H1 (cell line): ENCODE measurements at regions of chr16 and their contacts with region 1.

Region 1: DNA sequence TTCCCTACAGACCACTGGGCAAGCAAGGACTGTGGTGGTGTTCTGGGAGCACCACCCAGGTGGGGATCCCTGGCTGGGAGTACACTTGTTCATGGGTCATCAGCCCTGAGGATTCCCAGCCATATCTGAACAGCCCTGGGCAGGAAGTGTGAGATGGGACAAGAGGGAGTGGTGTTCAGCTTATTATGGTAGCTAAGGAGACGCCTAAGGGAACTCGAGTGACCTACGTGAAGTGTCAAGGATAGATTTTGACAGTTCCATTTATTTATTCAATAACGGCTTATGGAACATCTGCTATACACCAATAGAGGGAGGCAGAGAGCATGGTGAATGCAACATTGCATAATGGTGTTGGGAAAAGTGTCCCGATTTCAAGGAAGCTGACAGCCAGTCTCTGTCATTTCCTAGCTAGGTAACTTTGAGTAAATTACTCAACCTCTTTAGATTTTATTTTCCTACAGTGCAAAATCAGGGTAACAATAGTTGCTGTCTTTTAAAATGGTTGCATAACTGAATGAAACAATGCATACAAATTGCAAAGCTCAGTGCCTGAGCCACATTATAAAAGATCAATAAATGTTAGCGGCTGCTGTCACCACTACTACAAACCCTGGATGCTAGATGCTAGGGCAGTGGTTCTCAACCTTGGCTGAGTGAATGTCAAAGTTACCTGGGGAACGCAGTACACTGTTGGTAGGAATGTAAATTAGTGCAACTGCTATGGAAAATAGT is 534.1 kb downstream of the GRIN2A start:
- DNase-seq: peak in 1 of 2 experiments; percentile 50
- H3K4me3 ChIP-seq: no peak overlapping the region
- H3K27ac ChIP-seq: no peak overlapping the region
- H3K4me1 ChIP-seq: no peaks in the 10 kb centered on the region
- H3K27me3 ChIP-seq: no peaks in the 10 kb centered on the region
- CTCF ChIP-seq: peak in 2 of 3 experiments; percentile 64 to 80; a peak in 3 of 4 replicates
- EP300 ChIP-seq: no peak
- POLR2A ChIP-seq: no peak
- RAD21 ChIP-seq: peak; percentile 74 to 81

Region 2: GRCh38 chr16:9556949-9557665 is 91.0 kb before region 1 on chr16:
- CTCF ChIA-PET with region 1: no interaction called
- POLR2A ChIA-PET with region 1: no interaction called
- DNase-seq: no peak
- H3K4me3 ChIP-seq: no peak overlapping the region
- H3K27ac ChIP-seq: no peak overlapping the region
- H3K4me1 ChIP-seq: no peaks in the 10 kb centered on the region
- H3K27me3 ChIP-seq: no peaks in the 10 kb centered on the region
- CTCF ChIP-seq: no peak
- EP300 ChIP-seq: no peak
- POLR2A ChIP-seq: peak in 1 of 2 experiments; percentile 74; a peak in 1 of 3 replicates
- RAD21 ChIP-seq: no peak

Region 3: DNA sequence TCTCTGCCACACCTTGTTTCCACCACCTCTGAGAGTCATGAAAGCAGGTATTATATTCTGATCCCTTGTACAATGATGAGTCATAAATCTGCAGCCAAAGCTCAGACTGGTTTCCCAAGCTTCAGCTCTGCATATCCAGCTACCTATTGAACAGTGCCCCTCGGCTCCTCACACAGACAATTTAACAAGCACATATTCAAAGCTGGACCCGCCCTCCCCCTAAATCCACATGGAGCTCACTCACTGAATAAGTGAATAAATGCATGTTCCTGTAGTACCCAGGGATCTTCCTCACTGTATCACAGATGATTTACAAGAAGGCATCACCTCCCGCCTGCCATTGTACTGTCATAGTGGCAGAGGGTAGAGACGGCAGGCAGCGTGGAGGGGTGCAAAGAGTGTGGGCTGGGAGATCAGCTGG is 17.7 kb after region 1 on chr16:
- CTCF ChIA-PET with region 1: interaction called, 15 read pairs
- POLR2A ChIA-PET with region 1: interaction called, 64 read pairs
- DNase-seq: no peak
- H3K4me3 ChIP-seq: no peak overlapping the region
- H3K27ac ChIP-seq: no peak overlapping the region
- H3K4me1 ChIP-seq: peaks cover 0 to 17% (median 5%) of the 10 kb centered on the region in 4 experiments; a peak in 5 of 7 replicates
- H3K27me3 ChIP-seq: no peaks in the 10 kb centered on the region; a peak in 1 of 7 replicates
- CTCF ChIP-seq: no peak
- EP300 ChIP-seq: no peak
- POLR2A ChIP-seq: peak; percentile 61 to 70
- RAD21 ChIP-seq: no peak

Region 4: GRCh38 chr16:9695163-9695562 is 47.0 kb after region 1 on chr16:
- CTCF ChIA-PET with region 1: interaction called, 19 read pairs
- POLR2A ChIA-PET with region 1: no interaction called
- DNase-seq: no peak
- H3K4me3 ChIP-seq: no peak overlapping the region
- H3K27ac ChIP-seq: no peak overlapping the region
- H3K4me1 ChIP-seq: peaks cover 0 to 6% (median 0%) of the 10 kb centered on the region in 4 experiments; a peak in 1 of 7 replicates
- H3K27me3 ChIP-seq: no peaks in the 10 kb centered on the region
- CTCF ChIP-seq: peak in 2 of 3 experiments; percentile 37 to 39; a peak in 3 of 4 replicates
- EP300 ChIP-seq: no peak
- POLR2A ChIP-seq: no peak
- RAD21 ChIP-seq: peak in 1 of 2 experiments; percentile 42; a peak in 2 of 4 replicates

Region 5: GRCh38 chr16:9820476-9821246 is 172.5 kb after region 1 on chr16:
- CTCF ChIA-PET with region 1: interaction called, 16 read pairs
- POLR2A ChIA-PET with region 1: no interaction called
- DNase-seq: peak in 1 of 2 experiments; percentile 62
- H3K4me3 ChIP-seq: peak overlapping the region in 2 of 4 experiments; percentile 26 to 39; a peak in 4 of 8 replicates
- H3K27ac ChIP-seq: 0 out of 2 replicates have a peak overlapping the region, but pooled peaks have one; percentile 39
- H3K4me1 ChIP-seq: peaks cover 16 to 48% (median 27%) of the 10 kb centered on the region in 4 experiments
- H3K27me3 ChIP-seq: peaks cover 1 to 4% (median 2%) of the 10 kb centered on the region in 4 experiments; a peak in 5 of 7 replicates
- CTCF ChIP-seq: peak; percentile 21 to 73 (median 66)
- EP300 ChIP-seq: no peak
- POLR2A ChIP-seq: no peak
- RAD21 ChIP-seq: peak; percentile 74 to 84